CD8-positive, alpha-beta T cell (primary cell): ENCODE measurements at regions of chr12 and their contacts with region 1.

Region 1: DNA sequence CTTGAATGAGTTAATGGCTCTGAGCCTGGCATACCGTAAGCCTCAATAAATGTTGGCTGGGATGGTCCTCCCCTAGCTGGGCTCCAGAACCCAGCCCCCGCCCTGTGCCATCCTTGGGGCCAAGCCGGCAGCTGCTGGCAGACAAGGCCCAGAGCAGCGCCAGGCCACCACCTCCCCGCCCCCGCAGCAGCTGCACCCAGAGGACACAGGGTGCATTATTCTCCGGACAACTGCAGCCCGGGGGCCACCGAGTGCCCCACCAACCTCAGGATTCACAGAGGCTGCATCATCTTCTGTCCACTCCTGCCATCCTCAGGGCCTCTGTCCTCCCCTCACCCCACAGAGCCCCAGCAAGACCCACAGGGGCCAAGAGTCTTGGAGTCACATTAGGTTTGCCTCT is 92.7 kb downstream of the NCOR2 start:
- DNase-seq: no peak
- ATAC-seq: no peak
- H3K4me3 ChIP-seq: no peak overlapping the region
- H3K4me3 Mint-ChIP-seq: no peak overlapping the region
- H3K27ac ChIP-seq: no peak overlapping the region
- H3K27ac Mint-ChIP-seq: no peak overlapping the region
- H3K4me1 ChIP-seq: no peaks in the 10 kb centered on the region
- H3K4me1 Mint-ChIP-seq: peaks cover 26% of the 10 kb centered on the region
- H3K27me3 ChIP-seq: no peaks in the 10 kb centered on the region
- H3K27me3 Mint-ChIP-seq: no peaks in the 10 kb centered on the region
- CTCF ChIP-seq: no peak

Region 2: DNA sequence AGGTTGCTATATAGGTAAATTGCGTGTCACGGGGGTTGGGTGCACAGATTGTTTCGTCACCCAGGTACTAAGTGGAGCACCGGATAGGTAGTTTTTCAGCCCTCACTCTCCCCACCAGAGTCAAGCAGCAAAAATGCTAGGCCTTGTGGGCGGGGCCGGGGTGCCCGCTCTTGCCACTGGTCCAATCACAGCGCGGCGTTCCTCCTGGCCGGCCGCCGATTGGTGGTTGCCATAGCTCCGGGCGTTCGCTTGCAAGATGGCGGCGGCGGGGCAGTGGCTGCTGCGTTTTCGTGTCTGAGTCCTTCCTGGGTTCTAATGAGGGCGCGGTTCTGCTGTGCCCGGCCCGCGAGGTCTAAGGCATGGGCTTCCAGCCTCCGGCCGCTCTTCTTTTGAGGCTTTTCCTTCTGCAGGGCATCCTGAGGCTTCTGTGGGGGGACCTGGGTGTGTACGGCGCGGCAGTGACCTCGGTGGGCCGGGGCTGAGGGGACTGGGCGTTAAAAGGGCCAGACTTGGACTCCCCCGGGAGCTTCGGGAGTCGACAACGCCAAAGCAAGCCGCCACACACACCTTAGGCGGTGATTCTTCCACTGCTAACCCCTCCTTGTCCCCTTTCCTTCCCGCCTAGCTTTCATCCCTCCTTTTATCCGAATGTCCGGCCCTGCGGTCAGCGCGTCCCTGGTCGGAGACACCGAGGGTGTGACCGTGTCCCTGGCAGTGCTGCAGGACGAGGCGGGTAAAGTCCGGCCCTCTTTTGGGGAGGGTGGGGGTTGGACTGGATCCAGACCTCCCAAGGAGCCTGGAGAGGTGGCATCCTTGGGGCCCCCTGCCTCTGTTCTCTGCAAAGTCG is 803.6 kb before region 1 on chr12 and contains the start of gene TCTN2:
- CTCF ChIA-PET with region 1: no interaction called
- POLR2A ChIA-PET with region 1: no interaction called
- intact Hi-C with region 1: no loop called
- DNase-seq: peak; percentile 86 to 95 (median 94)
- ATAC-seq: peak; percentile 100
- H3K4me3 ChIP-seq: peak within 1 kb of the TSS; percentile 91 to 92
- H3K4me3 Mint-ChIP-seq: peak within 1 kb of the TSS; percentile 87
- H3K27ac ChIP-seq: peak within 1 kb of the TSS in 1 of 2 experiments; percentile 41
- H3K27ac Mint-ChIP-seq: peak within 1 kb of the TSS; percentile 69
- H3K4me1 ChIP-seq: peaks cover 11% of the 10 kb centered on the region
- H3K4me1 Mint-ChIP-seq: peaks cover 17% of the 10 kb centered on the region
- H3K27me3 ChIP-seq: no peaks in the 10 kb centered on the region
- H3K27me3 Mint-ChIP-seq: no peaks in the 10 kb centered on the region
- CTCF ChIP-seq: no peak
- total RNA-seq, gene TCTN2: 1.9 to 3.3 TPM

Region 3: DNA sequence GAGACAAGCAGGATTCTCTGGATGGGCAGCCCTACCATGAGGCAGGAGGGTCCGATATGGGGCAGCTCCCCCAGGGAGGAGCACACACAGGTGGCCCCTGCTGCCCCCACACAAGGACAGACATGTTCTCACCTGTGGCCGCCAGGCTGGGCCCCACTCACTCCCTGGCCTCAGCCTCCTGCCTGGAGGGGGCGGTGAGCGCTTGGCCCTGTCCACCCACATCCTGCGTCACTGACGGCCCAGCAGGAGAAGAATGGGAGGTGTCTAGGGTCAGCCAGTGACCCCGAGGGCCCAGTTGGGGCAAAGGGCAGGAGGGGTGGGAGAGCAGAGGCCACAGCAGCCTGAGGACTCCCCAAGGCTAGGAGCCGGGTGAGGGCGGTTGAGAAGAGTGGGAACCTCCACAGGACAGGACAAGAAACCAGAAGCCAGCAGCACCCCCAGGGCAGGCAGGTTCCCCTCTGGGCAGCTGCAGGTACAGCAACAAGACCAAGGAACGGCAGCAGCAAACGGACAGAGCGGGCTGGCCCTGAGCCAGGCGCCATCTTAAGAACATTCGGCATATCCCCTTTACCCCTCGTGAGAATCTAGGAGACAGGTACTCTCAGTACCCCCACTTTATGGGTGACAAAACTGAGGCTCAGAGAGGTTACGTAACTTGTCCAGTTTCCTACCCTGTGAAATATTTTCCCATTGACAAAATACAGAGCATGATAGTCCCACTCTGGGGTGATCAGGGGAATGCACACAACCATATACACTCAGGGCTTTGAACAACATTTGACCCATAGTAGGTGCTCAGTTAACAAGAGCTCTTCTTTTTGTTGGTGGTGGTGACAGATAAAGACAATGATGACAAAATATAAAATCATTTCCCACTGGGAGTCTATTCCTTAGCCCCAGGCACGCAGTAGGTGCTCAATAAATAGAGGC is 18.4 kb after region 1 on chr12:
- CTCF ChIA-PET with region 1: no interaction called
- POLR2A ChIA-PET with region 1: no interaction called
- intact Hi-C with region 1: loop called in 1 of 2 experiments (anchors 1 kb)
- DNase-seq: no peak
- ATAC-seq: no peak
- H3K4me3 ChIP-seq: no peak overlapping the region
- H3K4me3 Mint-ChIP-seq: no peak overlapping the region
- H3K27ac ChIP-seq: no peak overlapping the region
- H3K27ac Mint-ChIP-seq: no peak overlapping the region
- H3K4me1 ChIP-seq: peaks cover 16% of the 10 kb centered on the region
- H3K4me1 Mint-ChIP-seq: peaks cover 38% of the 10 kb centered on the region
- H3K27me3 ChIP-seq: no peaks in the 10 kb centered on the region
- H3K27me3 Mint-ChIP-seq: no peaks in the 10 kb centered on the region
- CTCF ChIP-seq: no peak